ENCODE measurements at regions of chr9 and their contacts with region 1.

Region 1: GRCh38 chr9:74132986-74133385 is 364.1 kb upstream of the RORB start:
- DNase-seq: no peak
- H3K4me3 ChIP-seq: no peak overlapping the region
- H3K27ac ChIP-seq: no peak overlapping the region
- H3K4me1 ChIP-seq: no peaks in the 10 kb centered on the region
- H3K27me3 ChIP-seq: no peaks in the 10 kb centered on the region
- CTCF ChIP-seq: no peak

Region 2: GRCh38 chr9:73284377-73284776 is 848.6 kb before region 1 on chr9:
- CTCF ChIA-PET with region 1: no interaction called
- dilution Hi-C with region 1: no loop called
- in situ Hi-C with region 1: no loop called
- intact Hi-C with region 1: no loop called
- DNase-seq: no peak
- H3K4me3 ChIP-seq: no peak overlapping the region
- H3K27ac ChIP-seq: no peak overlapping the region
- H3K4me1 ChIP-seq: no peaks in the 10 kb centered on the region
- H3K27me3 ChIP-seq: no peaks in the 10 kb centered on the region
- CTCF ChIP-seq: no peak

Region 3: GRCh38 chr9:74083681-74084433 is 49.1 kb before region 1 on chr9:
- CTCF ChIA-PET with region 1: no interaction called
- dilution Hi-C with region 1: loop called (anchors 5 kb)
- in situ Hi-C with region 1: no loop called
- intact Hi-C with region 1: no loop called
- DNase-seq: no peak
- H3K4me3 ChIP-seq: no peak overlapping the region
- H3K27ac ChIP-seq: no peak overlapping the region
- H3K4me1 ChIP-seq: peaks cover 3% of the 10 kb centered on the region
- H3K27me3 ChIP-seq: no peaks in the 10 kb centered on the region
- CTCF ChIP-seq: no peak

Region 4: DNA sequence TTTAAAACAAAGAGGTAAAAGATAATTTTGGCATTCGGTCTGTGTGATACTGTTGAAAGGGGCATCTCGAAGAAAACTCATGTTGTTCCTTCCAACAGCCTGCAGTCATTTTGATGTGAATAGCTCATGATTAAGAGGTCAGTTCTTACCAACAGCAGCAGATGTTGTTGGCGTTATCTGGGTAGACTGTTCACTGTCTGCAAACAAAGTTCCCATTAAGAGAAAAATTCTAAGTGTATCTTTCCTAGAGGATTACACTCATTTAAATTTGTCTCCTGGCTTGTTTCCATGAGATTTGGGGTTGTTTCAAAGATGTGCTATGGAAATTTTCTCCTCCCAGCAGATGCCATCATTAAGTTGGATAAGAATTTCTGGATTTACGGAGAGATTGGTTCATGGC is 226.0 kb after region 1 on chr9:
- CTCF ChIA-PET with region 1: no interaction called
- dilution Hi-C with region 1: no loop called
- in situ Hi-C with region 1: no loop called
- intact Hi-C with region 1: no loop called
- DNase-seq: no peak
- H3K4me3 ChIP-seq: no peak overlapping the region
- H3K27ac ChIP-seq: no peak overlapping the region
- H3K4me1 ChIP-seq: no peaks in the 10 kb centered on the region
- H3K27me3 ChIP-seq: no peaks in the 10 kb centered on the region
- CTCF ChIP-seq: no peak